ACHN (cell line): ENCODE measurements at regions of chr2 and their contacts with region 1.

Region 1: DNA sequence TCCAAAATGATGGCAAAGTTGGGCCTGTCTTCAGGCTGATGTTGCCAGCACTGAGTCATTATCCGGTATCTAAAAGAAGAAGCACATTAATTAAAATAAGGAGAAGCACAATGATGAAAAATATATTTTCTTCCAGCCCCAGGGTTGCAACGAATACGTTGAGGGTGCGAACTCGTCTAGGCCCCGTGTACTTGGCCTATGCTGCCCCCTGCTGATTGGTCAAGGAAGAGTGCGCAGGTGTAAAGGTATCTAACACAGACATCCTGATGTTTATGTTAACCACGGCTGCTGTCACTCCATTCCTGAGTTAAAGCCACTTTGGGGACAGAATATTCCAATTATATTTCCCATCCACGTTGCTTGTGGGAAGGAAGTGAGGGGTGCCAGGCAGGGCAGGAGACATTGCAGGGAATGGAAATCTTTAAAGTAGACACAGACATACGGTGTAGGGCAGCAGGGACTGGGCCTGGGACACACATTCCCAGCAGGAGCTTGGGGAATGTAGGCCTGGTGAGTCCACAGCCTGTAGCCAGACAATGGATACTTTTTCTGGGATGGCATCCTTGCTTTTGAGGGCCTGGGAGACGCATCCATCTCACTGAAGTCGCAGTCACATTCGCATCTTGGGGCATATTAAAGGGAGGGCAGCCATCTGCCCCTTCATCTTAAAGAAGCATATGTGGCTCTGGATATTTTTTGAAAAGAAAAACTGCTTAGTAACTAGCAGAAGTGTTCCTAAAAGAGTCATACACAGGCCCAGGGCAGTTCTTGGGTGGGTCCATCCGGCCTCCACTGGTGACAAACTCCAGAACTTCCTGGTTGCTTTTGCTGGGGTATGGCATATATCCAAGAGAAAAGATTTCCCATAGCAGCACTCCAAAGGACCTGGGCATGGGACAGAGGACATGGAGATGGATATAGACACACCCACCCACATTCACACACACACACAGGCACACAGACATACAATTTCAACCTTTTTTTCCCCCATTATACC is 81.9 kb downstream of the CLIP4 start:
- DNase-seq: peak; percentile 63

Region 2: GRCh38 chr2:28958689-28959088 is 238.4 kb before region 1 on chr2:
- in situ Hi-C with region 1: loop called (anchors 10 kb)
- DNase-seq: peak; percentile 77